Stomach (tissue), 19 donors: ENCODE measurements at regions of chr9 and their contacts with region 1.

Region 1: GRCh38 chr9:129656795-129657390 is 8.6 kb upstream of the PRRX2 start:
- DNase-seq: no peak
- H3K4me3 ChIP-seq: no peak overlapping the region
- H3K27ac ChIP-seq: no peak overlapping the region
- H3K4me1 ChIP-seq: peaks cover 0 to 14% (median 8%) of the 10 kb centered on the region in 4 donors
- H3K27me3 ChIP-seq: peaks cover 0 to 8% (median 0%) of the 10 kb centered on the region in 3 donors
- CTCF ChIP-seq: no peak
- EP300 ChIP-seq: no peak
- POLR2A ChIP-seq: no peak

Region 2: GRCh38 chr9:129726322-129727160 is 69.6 kb after region 1 on chr9:
- intact Hi-C with region 1: loop called (anchors 10 kb)
- DNase-seq: peak; percentile 67 to 86
- H3K4me3 ChIP-seq: peak overlapping the region in 3 of 4 donors; percentile 10 to 14 (median 11)
- H3K27ac ChIP-seq: peak overlapping the region in 1 of 5 donors; percentile 5
- H3K4me1 ChIP-seq: peaks cover 0 to 15% (median 7%) of the 10 kb centered on the region in 4 donors
- H3K27me3 ChIP-seq: peaks cover 0 to 20% (median 0%) of the 10 kb centered on the region in 3 donors
- CTCF ChIP-seq: peak in 5 of 7 experiments; percentile 48 to 92 (median 80)
- EP300 ChIP-seq: no peak
- POLR2A ChIP-seq: no peak

Region 3: DNA sequence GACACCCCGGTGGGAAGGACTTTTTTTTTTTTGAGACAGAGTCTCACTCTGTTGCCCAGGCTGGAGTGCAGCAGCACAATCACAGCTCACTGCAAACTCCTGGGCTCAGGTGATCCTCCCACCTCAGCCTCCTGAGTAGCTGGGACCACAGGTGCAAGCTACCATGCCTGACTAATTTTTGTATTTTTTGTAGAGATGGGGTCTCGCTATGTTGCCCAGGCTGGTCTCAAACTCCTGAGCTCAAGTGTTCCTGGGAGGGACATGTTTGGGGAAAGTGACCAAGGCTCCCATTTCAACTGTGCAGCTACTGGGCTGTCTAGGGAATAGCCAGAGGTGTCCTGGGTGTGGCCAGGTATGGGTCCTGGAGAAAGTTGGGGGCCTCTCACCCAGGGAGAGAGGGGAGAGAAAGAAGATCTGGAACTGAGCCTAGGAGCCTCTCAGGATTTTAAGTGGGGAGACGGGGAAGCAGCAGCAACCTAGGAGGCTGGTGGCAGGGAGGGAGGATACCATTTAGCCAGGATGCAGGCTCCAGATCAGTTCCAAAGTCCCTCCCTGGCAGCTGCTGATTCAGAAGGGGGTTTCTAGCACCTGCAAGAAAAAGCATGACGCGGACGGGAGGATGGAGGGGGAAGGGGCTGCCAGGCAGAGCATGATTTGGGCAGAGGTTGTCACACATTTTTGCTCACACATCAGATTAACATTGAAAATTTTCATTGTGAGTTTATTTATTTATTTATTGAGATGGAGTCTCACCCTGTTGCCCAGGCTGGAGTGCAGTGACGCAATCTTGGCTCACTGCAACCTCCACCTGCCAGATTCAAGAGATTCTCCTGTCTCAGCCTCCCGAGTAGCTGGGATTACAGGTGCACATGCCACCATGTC is 139.4 kb after region 1 on chr9:
- intact Hi-C with region 1: no loop called
- DNase-seq: no peak
- H3K4me3 ChIP-seq: no peak overlapping the region
- H3K27ac ChIP-seq: no peak overlapping the region
- H3K4me1 ChIP-seq: no peaks in the 10 kb centered on the region
- H3K27me3 ChIP-seq: peaks cover 0 to 22% (median 0%) of the 10 kb centered on the region in 3 donors
- CTCF ChIP-seq: no peak
- EP300 ChIP-seq: no peak
- POLR2A ChIP-seq: no peak